Colonic mucosa (tissue), 4 donors: ENCODE measurements at regions of chr17 and their contacts with region 1.

Region 1: DNA sequence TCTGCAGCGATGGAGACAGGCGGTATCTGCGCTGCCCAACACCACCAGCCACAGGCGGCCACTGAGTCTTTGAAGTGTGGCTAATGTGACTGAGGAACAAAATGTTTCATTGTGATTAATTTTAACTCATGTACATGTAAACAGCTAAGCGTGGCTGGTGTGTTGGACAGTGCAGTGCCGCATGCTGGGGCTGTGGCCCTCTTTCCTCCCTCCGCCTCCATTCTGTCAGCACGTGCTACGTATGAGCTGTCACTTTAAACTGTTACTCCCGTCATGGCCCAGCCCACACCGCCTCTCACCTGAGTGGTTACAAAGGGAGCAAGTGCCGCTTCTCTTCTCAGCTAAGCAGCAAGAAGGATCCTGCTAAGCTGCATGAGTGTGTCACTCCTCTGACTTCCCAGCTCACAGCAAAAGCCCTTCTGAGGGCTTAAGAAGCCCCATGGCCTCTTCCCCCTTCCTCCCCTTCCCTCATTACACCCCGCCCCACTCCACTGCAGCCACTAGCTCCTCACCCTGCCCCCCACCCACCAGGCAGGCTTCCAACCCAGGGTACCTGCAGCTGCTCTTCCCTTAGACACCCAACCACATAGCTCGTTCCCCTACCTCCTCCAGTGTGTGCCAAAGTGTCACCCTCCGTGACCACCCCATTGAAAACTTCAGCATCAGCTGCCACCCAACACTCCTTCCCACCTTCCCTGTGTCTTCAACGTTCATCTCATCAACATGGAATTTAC is 15.0 kb downstream of the HASPIN start:
- DNase-seq: peak; percentile 62
- H3K4me3 ChIP-seq: no peak overlapping the region
- H3K27ac ChIP-seq: no peak overlapping the region
- H3K4me1 ChIP-seq: peaks cover 7% of the 10 kb centered on the region
- H3K27me3 ChIP-seq: no peaks in the 10 kb centered on the region
- CTCF ChIP-seq: no peak

Region 2: DNA sequence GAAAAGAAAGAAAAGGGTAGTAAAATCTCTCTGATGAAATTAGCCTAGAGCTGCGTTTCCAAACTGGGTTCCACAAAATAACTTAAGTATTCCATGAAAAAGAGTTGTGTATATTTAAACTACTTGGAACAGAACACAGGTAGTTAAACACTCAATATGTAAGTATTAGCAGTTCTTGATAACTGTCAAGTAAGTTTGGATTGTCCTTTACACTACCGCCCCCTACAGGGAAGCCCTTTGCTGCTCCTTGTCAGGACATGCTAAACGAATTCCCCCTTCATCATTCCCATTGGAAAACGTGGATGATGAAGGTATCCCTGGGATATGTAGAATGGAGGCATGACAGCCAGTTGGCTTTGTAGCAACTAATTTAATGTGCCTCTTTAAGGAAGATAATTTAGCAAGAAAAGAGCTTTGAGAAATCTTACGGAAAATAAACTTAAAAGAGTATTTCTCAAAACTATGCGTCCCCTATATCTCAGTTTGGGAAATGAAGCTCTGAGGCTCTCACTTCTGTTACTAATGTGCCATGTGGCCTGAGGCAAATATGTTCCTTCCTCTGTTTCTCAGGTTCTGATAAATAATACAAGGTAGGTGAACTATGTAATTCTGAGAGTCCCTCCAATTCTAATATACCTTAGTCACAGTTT is 88.5 kb after region 1 on chr17:
- intact Hi-C with region 1: loop called (anchors 5 kb)
- DNase-seq: peak; percentile 69
- H3K4me3 ChIP-seq: no peak overlapping the region
- H3K27ac ChIP-seq: no peak overlapping the region
- H3K4me1 ChIP-seq: no peaks in the 10 kb centered on the region
- H3K27me3 ChIP-seq: no peaks in the 10 kb centered on the region
- CTCF ChIP-seq: peak; percentile 62

Region 3: DNA sequence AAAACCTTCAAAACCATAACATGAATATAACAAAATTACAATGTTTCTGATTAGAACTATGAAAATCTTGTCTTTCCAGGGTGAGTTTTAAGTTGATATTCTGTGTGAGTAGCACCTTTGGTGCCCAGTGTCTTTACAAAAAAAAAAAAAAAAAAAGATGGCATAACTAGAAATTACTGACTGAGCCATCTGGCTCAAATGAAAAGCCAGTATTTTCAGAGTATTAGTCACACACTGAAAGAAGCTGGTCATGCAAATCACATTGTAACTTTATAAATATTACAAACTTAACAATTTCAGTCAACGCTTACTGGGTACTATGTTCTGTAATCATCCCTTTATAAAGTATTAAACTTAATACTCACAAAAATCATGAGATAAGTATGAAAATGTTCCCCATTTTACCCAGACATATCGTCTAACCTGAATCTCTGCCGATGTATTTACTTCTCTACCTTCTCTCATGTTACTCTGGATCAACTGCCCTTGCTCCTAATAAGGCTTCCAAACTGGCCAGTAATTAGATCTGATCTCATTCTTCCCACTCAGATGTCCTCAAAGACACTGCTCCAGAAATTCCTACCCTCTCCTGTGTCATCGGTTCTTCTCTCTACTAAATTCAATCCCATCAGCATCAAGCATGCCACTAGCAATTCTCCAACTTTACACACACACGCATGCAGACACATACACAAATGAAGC is 602.3 kb after region 1 on chr17:
- intact Hi-C with region 1: no loop called
- DNase-seq: no peak
- H3K4me3 ChIP-seq: no peak overlapping the region
- H3K27ac ChIP-seq: no peak overlapping the region
- H3K4me1 ChIP-seq: peaks cover 4% of the 10 kb centered on the region
- H3K27me3 ChIP-seq: no peaks in the 10 kb centered on the region
- CTCF ChIP-seq: no peak